SK-N-SH (cell line): ENCODE measurements at regions of chr17 and their contacts with region 1.

Region 1: GRCh38 chr17:81484195-81484979 is 28.2 kb downstream of the ACTG1 start:
- DNase-seq: peak; percentile 97
- H3K4me3 ChIP-seq: peak overlapping the region; percentile 36 to 61
- H3K27ac ChIP-seq: no peak overlapping the region
- H3K4me1 ChIP-seq: peaks cover 6 to 51% of the 10 kb centered on the region in 2 experiments; a peak in 2 of 4 replicates
- H3K27me3 ChIP-seq: no peaks in the 10 kb centered on the region
- CTCF ChIP-seq: peak; percentile 95
- EP300 ChIP-seq: no peak
- RAD21 ChIP-seq: peak; percentile 98

Region 2: DNA sequence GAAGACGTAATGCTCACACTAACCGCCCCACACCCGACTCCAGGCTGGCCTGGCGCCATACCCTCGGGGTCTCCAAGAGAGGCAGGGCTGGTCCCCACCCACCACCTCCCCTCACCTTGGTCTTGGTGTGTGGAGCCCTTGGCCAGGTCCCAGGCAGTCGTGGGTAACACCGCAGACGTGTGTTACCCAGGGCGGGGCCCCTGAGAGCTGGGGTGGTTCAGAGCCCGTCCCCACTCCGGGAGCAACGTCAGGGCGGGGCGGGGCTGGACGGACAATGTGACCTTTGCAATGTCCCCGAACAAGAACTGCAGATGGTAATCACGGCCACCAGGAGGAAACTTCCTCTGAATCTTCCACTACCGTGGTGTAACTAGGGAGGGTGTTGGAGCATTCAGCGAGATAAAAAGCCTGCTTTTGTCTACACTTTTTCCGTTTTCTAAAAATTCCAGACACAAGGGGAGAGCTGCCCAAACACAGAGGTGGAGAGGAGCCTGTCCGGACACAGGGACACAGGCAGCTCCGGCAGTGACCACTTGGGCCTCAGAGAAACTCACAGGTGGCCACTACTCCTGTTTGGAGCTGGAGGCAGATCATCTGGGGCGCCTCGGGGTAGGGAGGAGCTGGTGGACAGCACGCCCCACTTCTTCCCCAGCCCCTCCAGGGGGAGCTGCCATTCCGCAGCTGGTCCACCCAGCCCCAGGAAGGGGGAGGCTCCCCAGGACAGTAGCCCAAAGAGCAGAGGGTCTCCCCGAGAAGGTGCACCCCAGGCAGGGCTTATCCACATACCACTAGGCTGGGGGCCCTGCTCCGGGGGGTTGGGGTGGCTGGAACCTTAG is 175.1 kb before region 1 on chr17:
- CTCF ChIA-PET with region 1: interaction called, 29 read pairs
- POLR2A ChIA-PET with region 1: no interaction called
- DNase-seq: peak; percentile 84
- H3K4me3 ChIP-seq: no peak overlapping the region
- H3K27ac ChIP-seq: peak overlapping the region in 1 of 2 experiments; percentile 99; a peak in 2 of 4 replicates
- H3K4me1 ChIP-seq: peaks cover 0 to 87% of the 10 kb centered on the region in 2 experiments; a peak in 2 of 4 replicates
- H3K27me3 ChIP-seq: peaks cover 6% of the 10 kb centered on the region; the same call in 1 of the 2 replicates
- CTCF ChIP-seq: peak; percentile 50
- EP300 ChIP-seq: no peak
- RAD21 ChIP-seq: peak; percentile 46

Region 3: GRCh38 chr17:81371910-81372760 is 112.3 kb before region 1 on chr17:
- CTCF ChIA-PET with region 1: interaction called, 41 read pairs
- POLR2A ChIA-PET with region 1: no interaction called
- DNase-seq: peak; percentile 91
- H3K4me3 ChIP-seq: no peak overlapping the region
- H3K27ac ChIP-seq: no peak overlapping the region
- H3K4me1 ChIP-seq: peaks cover 0 to 4% of the 10 kb centered on the region in 2 experiments; a peak in 1 of 4 replicates
- H3K27me3 ChIP-seq: peaks cover 16% of the 10 kb centered on the region; the same call in 1 of the 2 replicates
- CTCF ChIP-seq: peak; percentile 69
- EP300 ChIP-seq: no peak
- RAD21 ChIP-seq: peak; percentile 77

Region 4: DNA sequence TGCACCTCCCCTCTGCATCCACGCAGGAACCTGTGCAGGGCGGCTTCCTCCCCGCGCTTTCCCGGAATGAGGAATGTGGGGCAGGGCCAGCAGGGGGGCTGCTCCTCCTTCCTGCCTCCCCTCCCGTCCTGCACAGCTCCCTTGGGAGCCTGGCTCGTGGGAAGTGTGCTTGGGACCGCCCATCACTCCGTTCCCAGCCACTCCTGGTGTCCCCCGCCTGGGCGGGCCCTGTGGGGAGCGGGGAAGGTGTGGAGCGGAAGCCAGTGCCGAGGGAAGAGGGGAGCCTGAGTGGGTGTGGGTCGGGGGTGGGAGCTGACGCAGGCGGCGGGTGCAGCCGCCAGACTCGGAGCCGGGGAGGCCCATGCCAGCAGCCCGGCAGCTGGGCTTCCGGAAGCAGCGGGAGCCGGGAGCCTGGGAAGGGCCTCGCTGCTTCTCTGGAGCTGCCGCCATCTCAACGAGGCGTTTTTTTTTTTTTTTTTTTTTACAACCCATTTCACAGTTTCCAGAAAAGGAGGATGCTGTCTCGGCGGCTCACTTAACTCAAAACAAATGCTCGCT is 65.0 kb before region 1 on chr17:
- CTCF ChIA-PET with region 1: interaction called, 15 read pairs
- POLR2A ChIA-PET with region 1: interaction called, 4 read pairs
- DNase-seq: peak; percentile 95
- H3K4me3 ChIP-seq: peak overlapping the region; percentile 28
- H3K27ac ChIP-seq: peak overlapping the region; percentile 78 to 100
- H3K4me1 ChIP-seq: peaks cover 62 to 71% of the 10 kb centered on the region in 2 experiments; a peak in 3 of 4 replicates
- H3K27me3 ChIP-seq: no peaks in the 10 kb centered on the region
- CTCF ChIP-seq: no peak
- EP300 ChIP-seq: no peak; a peak in 1 of 4 replicates
- RAD21 ChIP-seq: no peak

Region 5: DNA sequence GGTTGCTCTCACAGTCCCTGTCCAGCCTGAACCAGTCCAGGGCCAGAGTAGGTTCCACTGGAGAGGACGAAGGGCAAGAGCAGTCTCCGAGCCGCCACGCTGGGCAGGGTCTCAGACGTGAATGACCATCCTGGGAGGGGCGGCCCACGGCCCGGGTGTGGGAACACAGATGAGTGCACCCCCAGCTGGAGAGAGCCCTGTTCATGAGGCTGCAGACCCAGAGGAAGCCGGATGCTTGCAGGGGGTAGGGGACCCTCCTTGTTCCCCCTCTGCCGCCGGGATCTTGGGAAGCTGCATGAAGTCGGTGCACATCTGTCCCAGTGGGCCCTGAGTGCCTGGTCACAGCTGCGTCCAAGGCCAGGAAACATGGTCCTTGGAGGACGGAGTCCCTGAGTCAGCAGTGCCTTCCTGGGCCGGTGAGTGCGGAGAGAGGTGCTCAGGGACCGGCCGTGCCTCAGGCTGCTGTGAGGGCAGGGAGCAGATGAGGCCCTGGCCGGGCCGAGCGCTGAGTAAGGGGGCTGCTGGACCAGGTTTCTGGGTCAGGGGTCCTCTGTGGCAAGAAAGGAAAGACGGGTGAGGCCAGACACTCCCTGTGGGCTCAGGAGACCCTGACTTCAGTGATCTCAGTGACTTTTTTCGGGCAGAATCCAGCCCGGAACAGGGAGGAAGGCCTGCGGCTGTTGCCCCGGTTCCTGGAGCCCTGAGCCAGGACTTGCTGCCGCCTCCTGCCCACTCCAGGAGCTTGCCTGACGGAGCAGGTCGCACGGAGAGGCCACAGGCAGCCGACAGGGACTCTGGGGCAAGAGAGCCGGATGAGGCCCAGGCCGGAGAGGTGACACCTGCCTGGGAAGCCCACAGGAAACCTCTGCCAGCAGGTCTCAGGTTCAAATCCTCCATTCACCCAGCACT is 17.6 kb before region 1 on chr17:
- CTCF ChIA-PET with region 1: interaction called, 41 read pairs
- POLR2A ChIA-PET with region 1: no interaction called
- DNase-seq: no peak
- H3K4me3 ChIP-seq: no peak overlapping the region
- H3K27ac ChIP-seq: no peak overlapping the region
- H3K4me1 ChIP-seq: peaks cover 0 to 11% of the 10 kb centered on the region in 2 experiments; a peak in 1 of 4 replicates
- H3K27me3 ChIP-seq: no peaks in the 10 kb centered on the region
- CTCF ChIP-seq: no peak
- EP300 ChIP-seq: no peak
- RAD21 ChIP-seq: no peak

Region 6: DNA sequence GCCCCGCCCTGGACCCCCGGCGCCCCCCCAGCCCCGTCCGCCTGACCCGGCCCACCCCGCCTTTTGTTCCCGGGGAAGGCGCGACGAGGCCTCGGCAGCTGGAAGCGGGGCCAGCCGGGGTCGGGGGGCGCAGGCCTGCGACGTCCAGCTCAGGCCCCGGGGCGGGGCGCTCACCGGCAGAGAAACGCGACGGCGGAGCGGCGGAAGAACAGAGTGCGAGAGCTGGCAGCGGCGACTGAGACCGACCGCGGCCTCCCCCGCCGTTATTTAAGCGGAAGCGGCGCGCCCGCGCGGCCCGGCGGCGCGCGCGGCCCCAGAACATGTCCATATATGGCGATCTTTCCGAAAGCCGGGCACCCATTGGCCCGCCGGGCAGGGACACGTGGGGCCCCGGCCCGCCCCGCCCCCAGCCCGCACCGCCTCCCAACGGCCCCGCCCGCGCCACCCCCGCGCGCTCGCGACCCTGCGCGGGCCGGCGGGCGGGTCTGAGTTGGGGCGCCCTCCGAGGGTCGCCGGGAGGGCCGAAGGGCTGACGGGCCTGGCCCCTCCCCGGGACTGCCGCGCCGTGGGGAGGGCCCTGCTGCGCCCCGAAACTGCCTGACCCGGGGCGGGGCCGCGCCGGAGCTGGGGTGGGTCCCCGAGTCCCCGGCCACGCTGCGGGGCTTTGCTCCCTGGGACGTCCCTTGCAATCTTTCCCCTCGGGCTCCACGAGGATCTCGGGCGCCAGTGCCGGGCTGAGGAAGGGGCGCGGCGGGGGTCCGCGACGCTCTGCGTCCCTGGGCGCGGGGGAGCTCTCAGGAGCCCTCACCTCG is 28.4 kb after region 1 on chr17 and contains the start of gene ACTG1:
- CTCF ChIA-PET with region 1: interaction called, 15 read pairs
- POLR2A ChIA-PET with region 1: interaction called, 8 read pairs
- DNase-seq: peak; percentile 100
- H3K4me3 ChIP-seq: peak within 1 kb of the TSS; percentile 70 to 91
- H3K27ac ChIP-seq: peak within 1 kb of the TSS; percentile 88
- H3K4me1 ChIP-seq: peaks cover 17 to 57% of the 10 kb centered on the region in 2 experiments; a peak in 3 of 4 replicates
- H3K27me3 ChIP-seq: no peaks in the 10 kb centered on the region
- CTCF ChIP-seq: no peak
- EP300 ChIP-seq: peak in 1 of 2 experiments; percentile 82; a peak in 1 of 4 replicates
- RAD21 ChIP-seq: no peak
- polyA plus RNA-seq, gene ACTG1: 3,367 and 7,871 TPM in 2 replicates

Region 7: GRCh38 chr17:81558941-81559806 is 74.8 kb after region 1 on chr17:
- CTCF ChIA-PET with region 1: no interaction called
- POLR2A ChIA-PET with region 1: no interaction called
- DNase-seq: no peak
- H3K4me3 ChIP-seq: no peak overlapping the region
- H3K27ac ChIP-seq: no peak overlapping the region
- H3K4me1 ChIP-seq: peaks cover 1 to 20% of the 10 kb centered on the region in 2 experiments; a peak in 3 of 4 replicates
- H3K27me3 ChIP-seq: no peaks in the 10 kb centered on the region
- CTCF ChIP-seq: peak; percentile 47
- EP300 ChIP-seq: no peak
- RAD21 ChIP-seq: peak; percentile 15; the same call in 1 of the 2 replicates